ENCODE measurements at regions of chr1 and their contacts with region 1.

Region 1: DNA sequence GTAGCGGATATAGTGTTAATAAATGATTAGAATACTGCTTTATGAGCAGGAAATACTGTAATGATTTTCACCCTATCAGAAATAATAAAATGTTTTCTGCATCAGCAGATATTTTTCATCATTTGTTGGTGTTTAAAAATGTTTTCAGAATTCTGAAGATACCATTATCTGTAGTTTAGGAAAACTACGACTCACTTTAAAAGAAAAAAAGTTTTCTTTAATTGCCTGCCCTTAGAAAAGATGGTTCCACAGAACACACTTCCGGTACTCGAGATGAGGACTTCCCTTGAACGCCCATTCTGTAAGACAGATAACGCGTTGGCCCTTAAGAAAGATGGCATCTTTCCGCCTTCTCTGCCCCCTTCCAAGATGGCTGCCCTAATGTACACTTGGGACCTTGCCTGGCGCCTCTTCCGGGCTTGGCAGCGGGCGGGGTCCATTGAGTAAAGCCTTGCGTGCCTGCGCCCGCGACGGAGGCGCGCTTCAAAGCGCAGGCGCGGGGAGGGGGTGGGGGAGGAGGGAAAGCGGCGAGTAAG is at the start of gene SZRD1:
- DNase-seq: peak; percentile 98
- H3K4me3 Mint-ChIP-seq: peak within 1 kb of the TSS; percentile 99
- H3K27ac Mint-ChIP-seq: peak within 1 kb of the TSS; percentile 100
- H3K4me1 Mint-ChIP-seq: peaks cover 34% of the 10 kb centered on the region
- H3K27me3 Mint-ChIP-seq: no peaks in the 10 kb centered on the region
- total RNA-seq, gene SZRD1: 195 and 200 TPM in 2 replicates

Region 2: GRCh38 chr1:15966081-15966955 is 400.5 kb before region 1 on chr1:
- intact Hi-C with region 1: loop called (anchors 5 kb)
- DNase-seq: peak; percentile 89
- H3K4me3 Mint-ChIP-seq: peak overlapping the region; percentile 87
- H3K27ac Mint-ChIP-seq: peak overlapping the region; percentile 100
- H3K4me1 Mint-ChIP-seq: peaks cover 65% of the 10 kb centered on the region
- H3K27me3 Mint-ChIP-seq: no peaks in the 10 kb centered on the region

Region 3: GRCh38 chr1:16206547-16207317 is 160.1 kb before region 1 on chr1:
- intact Hi-C with region 1: loop called (anchors 2 kb)
- DNase-seq: peak; percentile 98
- H3K4me3 Mint-ChIP-seq: peak overlapping the region; percentile 89
- H3K27ac Mint-ChIP-seq: peak overlapping the region; percentile 97
- H3K4me1 Mint-ChIP-seq: peaks cover 6% of the 10 kb centered on the region
- H3K27me3 Mint-ChIP-seq: peaks cover 3% of the 10 kb centered on the region

Region 4: DNA sequence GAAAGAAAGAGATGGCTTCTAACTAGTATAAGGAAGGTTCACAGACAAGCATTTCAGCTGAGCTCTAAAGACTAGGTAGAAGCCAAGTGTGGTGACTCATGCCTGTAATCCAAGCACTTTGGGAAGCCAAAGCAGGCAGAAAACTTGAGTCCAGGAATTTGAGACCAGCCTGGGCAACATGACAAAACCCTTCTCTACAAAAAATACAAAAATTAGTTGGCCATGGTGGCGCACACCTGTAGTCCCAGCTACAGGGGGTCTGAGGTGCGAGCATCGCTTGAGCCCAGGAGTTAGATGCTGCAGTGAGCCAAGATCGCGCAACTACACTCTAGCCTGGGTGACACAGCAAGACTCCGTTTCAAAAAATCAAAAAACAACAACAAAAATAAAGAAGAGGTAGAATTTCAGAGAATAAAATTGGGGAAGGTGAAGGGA is 42.3 kb before region 1 on chr1:
- intact Hi-C with region 1: no loop called
- DNase-seq: no peak
- H3K4me3 Mint-ChIP-seq: no peak overlapping the region
- H3K27ac Mint-ChIP-seq: no peak overlapping the region
- H3K4me1 Mint-ChIP-seq: peaks cover 11% of the 10 kb centered on the region
- H3K27me3 Mint-ChIP-seq: no peaks in the 10 kb centered on the region

Region 5: GRCh38 chr1:16351994-16352841 is 14.6 kb before region 1 on chr1 and contains the start of gene FBXO42:
- intact Hi-C with region 1: loop called (anchors 2 kb)
- DNase-seq: peak; percentile 99
- H3K4me3 Mint-ChIP-seq: peak within 1 kb of the TSS; percentile 90
- H3K27ac Mint-ChIP-seq: peak within 1 kb of the TSS; percentile 93
- H3K4me1 Mint-ChIP-seq: peaks cover 25% of the 10 kb centered on the region
- H3K27me3 Mint-ChIP-seq: no peaks in the 10 kb centered on the region
- total RNA-seq, gene FBXO42: 20.4 and 20.8 TPM in 2 replicates

Region 6: GRCh38 chr1:16396591-16396990 is 29.8 kb after region 1 on chr1:
- intact Hi-C with region 1: no loop called
- DNase-seq: no peak
- H3K4me3 Mint-ChIP-seq: no peak overlapping the region
- H3K27ac Mint-ChIP-seq: peak overlapping the region; percentile 62
- H3K4me1 Mint-ChIP-seq: peaks cover 30% of the 10 kb centered on the region
- H3K27me3 Mint-ChIP-seq: no peaks in the 10 kb centered on the region

Region 7: GRCh38 chr1:16420424-16421118 is 53.8 kb after region 1 on chr1:
- intact Hi-C with region 1: loop called (anchors 2 kb)
- DNase-seq: peak; percentile 90
- H3K4me3 Mint-ChIP-seq: peak overlapping the region; percentile 68
- H3K27ac Mint-ChIP-seq: peak overlapping the region; percentile 85
- H3K4me1 Mint-ChIP-seq: peaks cover 34% of the 10 kb centered on the region
- H3K27me3 Mint-ChIP-seq: no peaks in the 10 kb centered on the region

Region 8: GRCh38 chr1:16904560-16905111 is 537.8 kb after region 1 on chr1:
- intact Hi-C with region 1: loop called (anchors 10 kb)
- DNase-seq: peak; percentile 100
- H3K4me3 Mint-ChIP-seq: no peak overlapping the region
- H3K27ac Mint-ChIP-seq: no peak overlapping the region
- H3K4me1 Mint-ChIP-seq: peaks cover 24% of the 10 kb centered on the region
- H3K27me3 Mint-ChIP-seq: peaks cover 1% of the 10 kb centered on the region